A673 (cell line): ENCODE measurements at regions of chr7 and their contacts with region 1.

Region 1: GRCh38 chr7:92691578-92691977 is 101.4 kb upstream of the FAM133B start:
- DNase-seq: peak; percentile 83
- H3K4me3 ChIP-seq: no peak overlapping the region
- H3K27ac ChIP-seq: no peak overlapping the region
- H3K4me1 ChIP-seq: peaks cover 11% of the 10 kb centered on the region
- H3K27me3 ChIP-seq: no peaks in the 10 kb centered on the region
- CTCF ChIP-seq: peak; percentile 74

Region 2: GRCh38 chr7:92621026-92621540 is 70.5 kb before region 1 on chr7:
- CTCF ChIA-PET with region 1: no interaction called
- POLR2A ChIA-PET with region 1: no interaction called
- intact Hi-C with region 1: loop called (anchors 5 kb)
- DNase-seq: peak; percentile 88
- H3K4me3 ChIP-seq: no peak overlapping the region
- H3K27ac ChIP-seq: no peak overlapping the region
- H3K4me1 ChIP-seq: peaks cover 14% of the 10 kb centered on the region
- H3K27me3 ChIP-seq: no peaks in the 10 kb centered on the region
- CTCF ChIP-seq: peak; percentile 83

Region 3: GRCh38 chr7:92723943-92724342 is 32.4 kb after region 1 on chr7:
- CTCF ChIA-PET with region 1: no interaction called
- POLR2A ChIA-PET with region 1: interaction called, 10 read pairs
- intact Hi-C with region 1: no loop called
- DNase-seq: peak; percentile 93
- H3K4me3 ChIP-seq: no peak overlapping the region
- H3K27ac ChIP-seq: peak overlapping the region; percentile 88
- H3K4me1 ChIP-seq: peaks cover 45% of the 10 kb centered on the region
- H3K27me3 ChIP-seq: no peaks in the 10 kb centered on the region
- CTCF ChIP-seq: no peak

Region 4: GRCh38 chr7:92932450-92932849 is 240.9 kb after region 1 on chr7:
- CTCF ChIA-PET with region 1: interaction called, 12 read pairs
- POLR2A ChIA-PET with region 1: no interaction called
- intact Hi-C with region 1: no loop called
- DNase-seq: no peak
- H3K4me3 ChIP-seq: no peak overlapping the region
- H3K27ac ChIP-seq: no peak overlapping the region
- H3K4me1 ChIP-seq: no peaks in the 10 kb centered on the region
- H3K27me3 ChIP-seq: no peaks in the 10 kb centered on the region
- CTCF ChIP-seq: no peak

Region 5: DNA sequence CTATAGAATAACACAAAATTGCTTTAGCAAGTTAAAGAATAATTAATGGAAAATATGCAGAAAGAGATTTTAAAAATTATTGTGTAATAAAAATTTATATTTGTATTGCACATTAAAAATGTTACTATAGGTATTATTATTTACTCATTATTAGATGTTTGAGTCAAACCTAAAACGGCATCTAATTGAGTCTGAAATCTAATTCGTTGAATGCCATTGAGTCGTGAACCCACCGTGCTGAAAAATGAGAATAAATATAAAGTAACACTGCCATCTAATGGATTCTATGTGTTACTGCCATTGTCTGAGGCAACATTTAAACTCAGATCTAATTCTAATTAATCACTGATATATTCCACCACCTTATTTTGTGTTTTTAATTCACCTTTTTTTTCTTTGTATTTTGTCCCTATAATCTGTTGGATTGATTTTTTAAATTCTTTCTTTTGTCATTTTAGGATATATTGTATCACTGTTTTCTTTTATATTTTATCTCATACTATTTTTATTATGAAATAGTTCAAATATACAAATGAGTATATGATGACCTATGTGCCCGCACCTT is 364.0 kb after region 1 on chr7:
- CTCF ChIA-PET with region 1: no interaction called
- POLR2A ChIA-PET with region 1: no interaction called
- intact Hi-C with region 1: loop called (anchors 2 kb)
- DNase-seq: peak; percentile 62
- H3K4me3 ChIP-seq: no peak overlapping the region
- H3K27ac ChIP-seq: no peak overlapping the region
- H3K4me1 ChIP-seq: no peaks in the 10 kb centered on the region
- H3K27me3 ChIP-seq: peaks cover 30% of the 10 kb centered on the region
- CTCF ChIP-seq: peak; percentile 80